SK-N-SH (cell line): ENCODE measurements at regions of chr4 and their contacts with region 1.

Region 1: DNA sequence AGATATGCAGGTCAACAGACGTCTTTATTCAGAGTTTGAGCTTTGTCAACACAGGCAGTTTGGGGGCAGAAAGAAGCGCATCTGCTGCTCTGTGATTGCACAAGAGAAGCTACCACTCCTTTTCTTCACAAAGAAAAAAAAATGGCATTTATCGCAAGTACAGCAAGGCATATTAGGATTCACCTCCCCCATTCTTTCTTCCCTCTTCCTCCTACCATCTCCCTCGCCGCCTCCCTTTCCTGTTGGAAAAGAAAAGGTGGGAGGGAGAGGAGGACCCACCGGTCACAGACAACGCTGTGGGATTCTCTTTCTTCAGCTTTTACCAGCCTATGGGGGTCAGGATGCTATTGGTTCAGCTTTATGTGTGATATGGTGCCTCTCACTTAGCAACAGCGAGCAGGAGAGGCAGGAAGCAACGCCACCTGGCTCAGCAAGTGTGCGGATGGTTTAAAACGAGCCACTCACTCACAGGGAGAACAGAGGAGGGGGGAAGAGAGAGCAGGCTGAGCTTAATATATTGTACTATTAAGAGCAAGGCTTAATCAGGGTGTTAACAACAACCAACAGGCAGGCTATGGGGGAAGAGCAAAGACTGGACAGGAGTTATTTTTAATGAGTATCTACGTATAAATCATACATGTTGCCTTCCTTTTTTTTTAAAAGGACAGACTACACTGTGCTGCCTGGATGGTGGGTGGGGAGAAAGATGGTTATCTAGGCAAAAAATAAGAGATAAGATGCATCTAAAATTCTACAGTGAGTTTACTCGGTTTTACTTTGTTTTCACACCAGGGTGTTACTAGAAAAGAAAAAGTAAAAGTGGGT is 104.7 kb downstream of the MAML3 start:
- DNase-seq: peak; percentile 62
- H3K4me3 ChIP-seq: peak overlapping the region; percentile 46 to 59
- H3K27ac ChIP-seq: peak overlapping the region; percentile 71 to 100
- H3K4me1 ChIP-seq: peaks cover 9 to 46% of the 10 kb centered on the region in 2 experiments; a peak in 3 of 4 replicates
- H3K27me3 ChIP-seq: no peaks in the 10 kb centered on the region
- CTCF ChIP-seq: 0 out of 2 replicates have a peak, but pooled peaks have one; percentile 17
- EP300 ChIP-seq: peak in 1 of 2 experiments; percentile 77; a peak in 1 of 4 replicates
- RAD21 ChIP-seq: peak; percentile 67

Region 2: DNA sequence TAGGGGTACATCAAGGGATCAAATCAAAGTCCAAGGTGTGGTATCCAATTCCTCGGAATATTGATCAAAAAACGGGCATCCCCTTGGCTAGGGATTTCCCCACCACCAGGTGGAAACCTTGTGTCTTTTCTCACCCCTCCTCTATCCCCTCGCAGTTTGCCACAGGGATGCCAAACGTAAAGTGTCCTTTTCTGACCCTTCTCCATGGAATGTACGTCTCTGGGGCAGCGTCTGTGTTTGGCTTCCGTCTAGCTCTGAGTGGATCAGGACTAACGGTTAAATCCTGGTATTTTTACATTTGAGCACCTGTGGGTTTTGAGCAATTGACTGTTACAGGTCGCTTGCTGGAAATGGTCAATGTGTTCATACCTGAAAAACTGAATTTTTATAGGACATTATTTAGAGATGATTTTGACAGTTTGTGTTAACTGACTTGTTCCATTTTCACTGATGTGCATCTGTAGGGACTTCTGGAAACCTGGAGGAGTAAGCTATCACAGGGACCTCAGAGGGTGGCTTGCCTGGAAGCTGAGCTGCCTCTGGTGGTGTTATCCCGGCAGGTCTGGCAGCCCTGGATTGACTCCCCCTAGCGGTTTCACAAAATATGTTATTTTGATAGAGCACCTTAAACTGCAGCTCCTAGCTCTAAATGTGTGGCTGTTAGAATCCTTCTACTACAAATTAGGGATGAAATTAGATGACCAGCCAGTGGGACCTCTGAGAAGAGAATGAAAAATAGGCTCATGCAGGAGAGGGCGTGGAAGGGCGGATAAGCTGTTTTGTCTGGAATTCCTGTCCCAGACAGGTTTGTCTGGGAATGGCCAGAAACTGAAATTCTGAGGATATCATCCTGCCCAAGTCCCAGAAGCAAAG is 392.4 kb before region 1 on chr4:
- CTCF ChIA-PET with region 1: interaction called, 10 read pairs
- POLR2A ChIA-PET with region 1: interaction called, 6 read pairs
- DNase-seq: peak; percentile 74
- H3K4me3 ChIP-seq: peak overlapping the region in 1 of 2 experiments; percentile 26; a peak in 2 of 4 replicates
- H3K27ac ChIP-seq: no peak overlapping the region
- H3K4me1 ChIP-seq: peaks cover 6 to 11% of the 10 kb centered on the region in 2 experiments; a peak in 2 of 4 replicates
- H3K27me3 ChIP-seq: no peaks in the 10 kb centered on the region
- CTCF ChIP-seq: peak; percentile 88
- EP300 ChIP-seq: no peak
- RAD21 ChIP-seq: peak; percentile 59

Region 3: DNA sequence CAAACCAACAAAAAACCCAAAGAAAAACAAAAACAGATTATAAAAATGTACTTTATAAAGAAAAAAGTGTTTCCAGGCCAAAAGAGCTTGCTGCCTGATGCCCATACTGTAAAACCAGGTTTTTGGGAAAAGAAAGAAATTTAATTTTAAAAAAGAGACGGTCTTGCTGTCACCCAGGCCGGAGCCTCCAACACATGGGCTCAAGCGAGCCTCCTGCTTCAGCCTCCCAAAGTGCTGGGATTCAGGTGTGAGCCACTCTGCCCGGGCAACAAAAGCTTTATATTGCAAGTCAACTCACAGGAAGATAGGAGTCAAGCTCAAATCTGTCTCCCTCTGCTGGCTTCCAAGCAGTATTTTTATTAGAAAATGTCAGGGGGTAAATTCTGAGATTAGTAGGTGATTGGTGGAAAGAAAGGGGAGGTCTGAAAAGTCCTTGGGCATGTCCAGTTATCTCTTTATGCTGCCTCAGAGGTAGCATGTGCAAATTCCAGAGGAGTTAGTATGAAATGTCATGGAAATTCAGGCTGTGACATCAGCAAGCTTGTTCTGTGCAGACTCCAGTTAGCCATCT is 344.2 kb before region 1 on chr4:
- CTCF ChIA-PET with region 1: no interaction called
- POLR2A ChIA-PET with region 1: no interaction called
- DNase-seq: no peak
- H3K4me3 ChIP-seq: no peak overlapping the region
- H3K27ac ChIP-seq: no peak overlapping the region
- H3K4me1 ChIP-seq: no peaks in the 10 kb centered on the region
- H3K27me3 ChIP-seq: no peaks in the 10 kb centered on the region
- CTCF ChIP-seq: peak; percentile 42
- EP300 ChIP-seq: no peak
- RAD21 ChIP-seq: no peak

Region 4: GRCh38 chr4:139887962-139888735 is 161.1 kb before region 1 on chr4:
- CTCF ChIA-PET with region 1: interaction called, 4 read pairs
- POLR2A ChIA-PET with region 1: interaction called, 27 read pairs
- DNase-seq: peak; percentile 23
- H3K4me3 ChIP-seq: peak overlapping the region in 1 of 2 experiments; percentile 22; a peak in 1 of 4 replicates
- H3K27ac ChIP-seq: peak overlapping the region; percentile 54 to 98
- H3K4me1 ChIP-seq: peaks cover 36 to 37% of the 10 kb centered on the region in 2 experiments
- H3K27me3 ChIP-seq: no peaks in the 10 kb centered on the region
- CTCF ChIP-seq: no peak
- EP300 ChIP-seq: no peak; a peak in 1 of 4 replicates
- RAD21 ChIP-seq: no peak

Region 5: GRCh38 chr4:139943277-139943676 is 106.0 kb before region 1 on chr4:
- CTCF ChIA-PET with region 1: interaction called, 14 read pairs
- POLR2A ChIA-PET with region 1: interaction called, 14 read pairs
- DNase-seq: no peak
- H3K4me3 ChIP-seq: no peak overlapping the region
- H3K27ac ChIP-seq: peak overlapping the region; percentile 19 to 100; a peak in 3 of 4 replicates
- H3K4me1 ChIP-seq: peaks cover 5 to 31% of the 10 kb centered on the region in 2 experiments; a peak in 3 of 4 replicates
- H3K27me3 ChIP-seq: no peaks in the 10 kb centered on the region
- CTCF ChIP-seq: no peak
- EP300 ChIP-seq: no peak
- RAD21 ChIP-seq: no peak

Region 6: GRCh38 chr4:140078366-140078765 is 29.1 kb after region 1 on chr4:
- CTCF ChIA-PET with region 1: interaction called, 11 read pairs
- POLR2A ChIA-PET with region 1: no interaction called
- DNase-seq: no peak
- H3K4me3 ChIP-seq: no peak overlapping the region
- H3K27ac ChIP-seq: peak overlapping the region in 1 of 2 experiments; percentile 25; a peak in 1 of 4 replicates
- H3K4me1 ChIP-seq: peaks cover 0 to 27% of the 10 kb centered on the region in 2 experiments; a peak in 2 of 4 replicates
- H3K27me3 ChIP-seq: no peaks in the 10 kb centered on the region
- CTCF ChIP-seq: no peak
- EP300 ChIP-seq: no peak
- RAD21 ChIP-seq: no peak

Region 7: DNA sequence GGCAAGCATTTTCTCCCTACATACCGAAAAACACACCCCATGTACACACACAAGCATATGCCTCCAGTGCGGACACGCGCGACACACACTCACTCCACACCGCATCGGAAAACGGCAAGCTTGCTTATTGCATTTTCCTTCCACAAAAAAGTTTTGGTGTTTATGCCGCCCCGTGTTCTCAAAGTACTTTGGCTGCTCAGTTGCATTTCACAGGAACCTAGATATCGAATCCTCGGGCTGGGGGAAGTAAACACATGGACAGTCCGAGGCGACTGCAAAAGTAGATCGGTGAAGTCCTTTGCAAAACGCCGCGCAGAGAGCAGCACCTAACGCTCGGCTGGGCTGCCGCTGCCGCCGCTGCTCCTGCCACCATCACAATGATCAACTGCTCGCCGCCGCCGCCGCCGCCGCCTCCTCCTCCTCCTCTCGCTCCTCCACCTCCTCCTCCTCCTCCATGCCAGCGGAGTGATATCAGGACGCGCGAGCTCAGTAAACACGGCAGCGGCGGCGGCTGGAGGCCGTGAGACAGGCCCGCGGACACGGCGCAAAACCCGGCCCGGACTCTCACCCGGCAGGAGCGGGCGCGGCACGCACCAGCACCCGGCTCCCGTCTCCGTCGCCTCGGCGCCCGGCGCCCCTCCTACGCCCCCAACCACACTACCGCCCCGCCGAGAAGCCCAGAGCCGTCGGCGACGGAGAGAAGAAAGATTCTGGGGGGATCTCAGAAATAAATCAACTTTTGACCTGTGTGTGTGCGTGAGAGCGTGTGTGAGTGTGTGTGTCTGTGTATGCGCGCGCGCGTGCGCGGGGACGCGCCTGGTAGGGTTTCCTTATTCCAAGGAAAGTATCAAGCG is 104.7 kb after region 1 on chr4 and contains the start of gene MAML3:
- CTCF ChIA-PET with region 1: interaction called, 16 read pairs
- POLR2A ChIA-PET with region 1: interaction called, 22 read pairs
- DNase-seq: peak; percentile 90
- H3K4me3 ChIP-seq: peak within 1 kb of the TSS; percentile 94 to 97
- H3K27ac ChIP-seq: peak within 1 kb of the TSS; percentile 98 to 99
- H3K4me1 ChIP-seq: peaks cover 0 to 17% of the 10 kb centered on the region in 2 experiments; a peak in 2 of 4 replicates
- H3K27me3 ChIP-seq: no peaks in the 10 kb centered on the region
- CTCF ChIP-seq: no peak
- EP300 ChIP-seq: peak; percentile 18 to 79; a peak in 3 of 4 replicates
- RAD21 ChIP-seq: no peak; the same call in 1 of the 2 replicates
- polyA plus RNA-seq, gene MAML3: 5.3 and 5.6 TPM in 2 replicates

Region 8: GRCh38 chr4:140252742-140253555 is 203.7 kb after region 1 on chr4:
- CTCF ChIA-PET with region 1: interaction called, 13 read pairs
- POLR2A ChIA-PET with region 1: interaction called, 5 read pairs
- DNase-seq: peak; percentile 94
- H3K4me3 ChIP-seq: peak overlapping the region; percentile 47 to 55
- H3K27ac ChIP-seq: peak overlapping the region; percentile 78 to 92
- H3K4me1 ChIP-seq: peaks cover 49 to 57% of the 10 kb centered on the region in 2 experiments
- H3K27me3 ChIP-seq: no peaks in the 10 kb centered on the region
- CTCF ChIP-seq: peak; percentile 87
- EP300 ChIP-seq: peak in 1 of 2 experiments; percentile 40; a peak in 1 of 4 replicates
- RAD21 ChIP-seq: peak; percentile 85